HepG2 (cell line): ENCODE measurements at regions of chr17 and their contacts with region 1.

Region 1: GRCh38 chr17:60559995-60560859 is 34.2 kb upstream of the APPBP2 start:
- DNase-seq: peak; percentile 92
- ATAC-seq: peak; percentile 88
- H3K4me3 ChIP-seq: peak overlapping the region; percentile 61 to 77 (median 64)
- H3K27ac ChIP-seq: peak overlapping the region; percentile 82
- H3K4me1 ChIP-seq: peaks cover 38% of the 10 kb centered on the region
- H3K27me3 ChIP-seq: no peaks in the 10 kb centered on the region; a peak in 1 of 5 replicates
- CTCF ChIP-seq: peak; percentile 11; the same call in 1 of the 2 replicates
- EP300 ChIP-seq: peak; percentile 40 to 68; a peak in 2 of 4 replicates
- POLR2A ChIP-seq: peak; percentile 62 to 87
- RAD21 ChIP-seq: no peak; the same call in 1 of the 2 replicates

Region 2: DNA sequence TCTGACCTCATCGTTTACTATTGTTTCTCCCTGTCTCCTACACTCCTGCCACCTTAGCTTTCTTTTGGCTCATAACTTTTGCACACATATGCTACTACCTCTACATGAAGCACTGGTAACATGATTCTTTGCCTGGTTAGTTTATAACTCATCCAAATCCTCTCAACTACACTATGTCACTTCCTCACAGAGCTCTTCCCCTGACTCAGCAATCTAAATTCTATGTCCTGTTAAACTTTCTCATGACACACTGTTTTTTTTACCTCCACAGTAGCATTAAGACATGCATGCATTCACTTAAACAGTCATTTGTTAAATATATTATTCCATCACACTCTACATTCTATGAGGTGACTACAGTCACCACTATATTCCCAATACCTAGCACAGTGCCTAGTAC is 53.9 kb before region 1 on chr17:
- CTCF ChIA-PET with region 1: no interaction called
- POLR2A ChIA-PET with region 1: no interaction called
- in situ Hi-C with region 1: no loop called
- intact Hi-C with region 1: no loop called
- DNase-seq: peak; percentile 9
- ATAC-seq: peak; percentile 46; the same call in 2 of the 3 replicates
- H3K4me3 ChIP-seq: no peak overlapping the region
- H3K27ac ChIP-seq: no peak overlapping the region
- H3K4me1 ChIP-seq: peaks cover 6% of the 10 kb centered on the region; the same call in 1 of the 2 replicates
- H3K27me3 ChIP-seq: no peaks in the 10 kb centered on the region
- CTCF ChIP-seq: no peak
- EP300 ChIP-seq: no peak
- POLR2A ChIP-seq: no peak
- RAD21 ChIP-seq: no peak

Region 3: DNA sequence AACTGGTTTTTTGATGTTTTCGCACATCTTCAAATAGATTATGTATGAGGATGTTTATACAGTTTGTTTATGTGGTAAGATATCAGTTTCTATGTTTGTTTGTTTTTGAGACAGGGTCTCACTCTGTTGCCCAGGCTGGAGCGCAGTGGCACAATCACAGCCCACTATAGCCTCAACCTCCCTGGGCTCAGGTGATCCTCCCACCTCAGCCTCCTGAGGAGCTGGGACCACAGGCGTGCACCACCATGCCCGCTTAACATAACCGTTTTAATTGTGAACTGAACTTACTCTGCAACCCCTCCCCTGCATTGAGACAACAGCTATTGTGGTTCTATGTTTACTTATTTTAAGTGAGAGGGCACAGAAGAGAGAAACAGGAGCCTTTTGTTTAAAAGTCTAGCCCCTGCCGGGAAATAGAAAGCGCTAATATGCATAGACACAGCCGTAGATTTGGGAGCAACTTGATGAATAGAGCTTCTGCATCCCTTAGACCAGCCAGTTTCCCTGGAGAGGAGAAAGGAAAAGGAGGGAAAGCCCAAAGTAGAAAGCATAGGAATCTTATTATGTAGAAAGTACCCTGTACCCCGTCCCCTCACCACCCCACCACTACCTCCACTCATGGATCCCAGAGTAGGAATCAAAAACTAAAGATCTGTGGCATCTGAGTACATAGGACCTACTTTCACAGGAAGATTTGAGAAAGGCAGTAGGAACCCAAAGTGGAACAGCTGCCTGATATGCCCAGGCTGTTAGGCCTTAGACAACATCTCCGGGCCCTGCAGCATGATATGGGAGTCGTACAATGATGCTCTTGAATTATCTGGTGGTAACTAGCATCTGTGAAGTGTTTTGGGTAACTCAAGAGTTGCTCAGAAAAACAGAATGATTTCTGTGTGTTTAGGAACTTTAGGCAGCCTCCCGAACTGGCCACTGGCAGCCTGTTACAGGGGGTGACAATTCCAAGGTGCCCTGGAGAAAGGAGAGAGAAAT is 14.5 kb before region 1 on chr17:
- CTCF ChIA-PET with region 1: no interaction called
- POLR2A ChIA-PET with region 1: interaction called, 4 read pairs
- in situ Hi-C with region 1: no loop called
- intact Hi-C with region 1: loop called (anchors 1 kb)
- DNase-seq: no peak
- ATAC-seq: peak; percentile 47
- H3K4me3 ChIP-seq: no peak overlapping the region
- H3K27ac ChIP-seq: no peak overlapping the region
- H3K4me1 ChIP-seq: peaks cover 18% of the 10 kb centered on the region
- H3K27me3 ChIP-seq: no peaks in the 10 kb centered on the region
- CTCF ChIP-seq: no peak
- EP300 ChIP-seq: no peak
- POLR2A ChIP-seq: no peak
- RAD21 ChIP-seq: no peak